GM12878 (cell line): ENCODE measurements at regions of chr17 and their contacts with region 1.

Region 1: DNA sequence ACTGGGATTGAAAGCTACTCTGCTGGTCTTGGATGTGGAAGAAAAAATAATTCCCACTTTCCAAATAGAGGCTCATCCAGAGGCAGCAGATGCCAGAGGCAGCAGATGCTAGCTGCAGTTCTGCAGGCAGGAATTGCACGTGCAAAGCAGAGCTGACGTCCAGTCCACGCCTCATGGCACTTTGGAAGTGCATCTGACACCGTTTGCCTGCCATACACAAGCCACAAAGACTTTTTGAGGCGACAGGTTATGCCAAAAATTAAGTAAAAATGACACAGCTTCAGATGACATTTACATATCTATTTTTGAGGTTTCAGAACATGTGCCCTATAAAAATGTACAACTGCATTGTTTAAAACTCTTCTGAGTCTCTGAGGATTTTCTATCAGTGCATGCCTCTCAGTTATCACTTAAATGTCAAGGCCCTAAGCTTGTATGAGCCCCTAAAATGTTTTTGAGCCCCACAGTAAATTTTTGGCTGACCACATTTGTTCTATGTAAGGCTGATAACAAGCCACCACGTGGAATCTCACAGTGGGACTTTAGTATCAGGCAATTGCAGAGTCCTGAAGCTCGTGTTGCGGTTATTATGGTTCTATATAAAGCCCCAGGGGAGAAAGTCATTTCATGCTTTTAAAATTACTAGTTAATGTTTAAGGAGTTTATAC is 239.2 kb downstream of the PRKCA start:
- DNase-seq: peak; percentile 40
- ATAC-seq: peak; percentile 83
- H3K4me3 ChIP-seq: 0 out of 2 replicates have a peak overlapping the region, but pooled peaks have one; percentile 14
- H3K27ac ChIP-seq: peak overlapping the region; percentile 58; the same call in 1 of the 2 replicates
- H3K4me1 ChIP-seq: peaks cover 9% of the 10 kb centered on the region
- H3K27me3 ChIP-seq: no peaks in the 10 kb centered on the region
- CTCF ChIP-seq: no peak
- EP300 ChIP-seq: peak; percentile 12 to 55; a peak in 2 of 4 replicates
- POLR2A ChIP-seq: no peak
- RAD21 ChIP-seq: no peak

Region 2: GRCh38 chr17:66337866-66338485 is 203.6 kb before region 1 on chr17:
- CTCF ChIA-PET with region 1: no interaction called
- POLR2A ChIA-PET with region 1: no interaction called
- RAD21 ChIA-PET with region 1: no interaction called
- SMC1A ChIA-PET with region 1: no interaction called
- in situ Hi-C with region 1: no loop called
- intact Hi-C with region 1: no loop called
- DNase-seq: no peak
- ATAC-seq: 0 out of 3 replicates have a peak, but pooled peaks have one; percentile 15
- H3K4me3 ChIP-seq: no peak overlapping the region
- H3K27ac ChIP-seq: no peak overlapping the region
- H3K4me1 ChIP-seq: no peaks in the 10 kb centered on the region
- H3K27me3 ChIP-seq: no peaks in the 10 kb centered on the region
- CTCF ChIP-seq: no peak
- EP300 ChIP-seq: no peak
- POLR2A ChIP-seq: no peak
- RAD21 ChIP-seq: no peak

Region 3: GRCh38 chr17:66466840-66467367 is 74.7 kb before region 1 on chr17:
- CTCF ChIA-PET with region 1: interaction called, 3 read pairs
- POLR2A ChIA-PET with region 1: no interaction called
- RAD21 ChIA-PET with region 1: interaction called, 5 read pairs
- SMC1A ChIA-PET with region 1: interaction called, 6 read pairs
- in situ Hi-C with region 1: no loop called
- intact Hi-C with region 1: loop called (anchors 5 kb)
- DNase-seq: no peak
- ATAC-seq: peak; percentile 40
- H3K4me3 ChIP-seq: no peak overlapping the region
- H3K27ac ChIP-seq: no peak overlapping the region
- H3K4me1 ChIP-seq: peaks cover 25% of the 10 kb centered on the region
- H3K27me3 ChIP-seq: no peaks in the 10 kb centered on the region
- CTCF ChIP-seq: no peak
- EP300 ChIP-seq: no peak
- POLR2A ChIP-seq: no peak
- RAD21 ChIP-seq: no peak